Vagina (tissue), 2 donors: ENCODE measurements at regions of chr5 and their contacts with region 1.

Region 1: DNA sequence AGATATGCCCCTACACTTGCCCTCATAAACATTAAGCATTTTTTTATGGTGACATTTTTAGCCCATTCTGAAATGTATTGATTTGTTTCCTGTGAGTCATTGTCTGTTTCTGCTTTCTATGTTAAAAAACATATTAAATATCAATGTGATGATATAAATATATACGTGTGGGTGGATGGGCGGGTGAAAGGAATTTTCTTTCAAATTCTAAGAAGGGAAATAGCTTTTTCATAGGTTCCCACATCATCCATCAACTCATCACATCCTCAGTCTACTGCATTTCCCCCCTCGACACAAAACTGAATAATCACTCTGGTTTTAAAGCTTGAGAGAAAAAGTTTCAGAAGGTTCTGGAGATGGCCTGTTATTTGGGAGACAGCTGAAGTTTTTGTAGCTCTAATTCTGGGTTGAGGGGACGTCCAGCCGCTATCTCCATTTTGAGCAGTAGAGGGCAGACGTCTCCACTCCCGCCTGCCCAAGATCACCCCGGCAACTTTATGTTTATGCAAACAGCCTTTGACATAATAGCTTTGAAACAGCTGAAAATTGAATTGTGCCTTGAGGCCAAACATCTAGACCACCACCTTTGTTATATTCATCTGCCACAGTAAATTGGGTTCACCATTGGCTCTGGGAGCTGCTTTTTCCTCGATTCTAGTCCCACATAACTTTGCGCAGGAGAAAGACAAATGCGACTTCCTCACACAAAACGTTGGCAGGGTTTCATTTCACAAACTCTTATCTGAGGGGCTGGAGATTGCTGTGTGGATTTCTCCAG is 216.2 kb upstream of the CLINT1 start:
- DNase-seq: no peak
- H3K4me3 ChIP-seq: peak overlapping the region in 1 of 2 donors; percentile 27
- H3K27ac ChIP-seq: no peak overlapping the region
- H3K4me1 ChIP-seq: no peaks in the 10 kb centered on the region
- H3K27me3 ChIP-seq: no peaks in the 10 kb centered on the region
- CTCF ChIP-seq: peak; percentile 45 to 77 (median 68)
- POLR2A ChIP-seq: no peak

Region 2: DNA sequence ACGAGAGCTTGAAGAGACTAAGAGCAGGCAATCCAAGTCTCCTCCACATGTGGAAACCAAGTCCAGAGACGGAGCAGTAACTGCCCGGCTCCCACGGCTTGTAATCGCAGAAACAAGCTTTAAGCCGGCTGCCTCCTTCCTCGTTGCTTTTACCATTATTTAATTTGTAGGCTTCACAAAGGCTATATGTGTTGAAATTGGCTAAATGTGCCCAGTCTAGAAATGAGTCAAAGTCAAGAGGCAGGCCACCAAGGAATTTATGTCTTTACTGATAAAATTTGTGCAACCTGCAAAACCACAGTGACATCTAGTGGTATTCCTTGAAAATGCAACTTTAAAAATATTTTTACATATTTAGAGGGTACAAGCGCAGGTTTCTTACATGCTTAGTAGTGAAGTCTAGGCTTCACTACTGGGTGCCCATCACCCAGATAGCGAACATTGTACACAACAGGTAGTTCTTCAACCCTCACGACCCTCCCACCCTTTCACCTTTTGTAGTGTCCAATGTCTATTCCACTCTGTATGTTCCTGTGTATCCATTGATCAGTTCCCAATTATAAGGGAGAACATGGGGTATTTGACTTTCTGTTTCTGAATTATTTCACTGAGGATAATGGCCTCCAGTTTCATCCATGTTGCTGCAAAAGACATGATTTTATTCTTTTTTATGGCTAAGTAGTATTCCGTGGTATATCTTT is 1058.0 kb after region 1 on chr5:
- intact Hi-C with region 1: loop called (anchors 10 kb)
- DNase-seq: no peak
- H3K4me3 ChIP-seq: peak overlapping the region in 1 of 2 donors; percentile 3
- H3K27ac ChIP-seq: peak overlapping the region; percentile 12
- H3K4me1 ChIP-seq: peaks cover 9% of the 10 kb centered on the region
- H3K27me3 ChIP-seq: no peaks in the 10 kb centered on the region
- CTCF ChIP-seq: peak; percentile 57 to 78 (median 70)
- POLR2A ChIP-seq: no peak